ENCODE measurements at regions of chr11 and their contacts with region 1.

Region 1: GRCh38 chr11:108647701-108648527 is 17.0 kb upstream of the DDX10 start:
- DNase-seq: peak; percentile 42 to 82 (median 56)
- ATAC-seq: peak; percentile 96
- H3K4me3 ChIP-seq: no peak overlapping the region
- H3K4me3 Mint-ChIP-seq: no peak overlapping the region
- H3K27ac ChIP-seq: no peak overlapping the region
- H3K27ac Mint-ChIP-seq: no peak overlapping the region
- H3K4me1 ChIP-seq: no peaks in the 10 kb centered on the region
- H3K4me1 Mint-ChIP-seq: no peaks in the 10 kb centered on the region
- H3K27me3 ChIP-seq: no peaks in the 10 kb centered on the region
- H3K27me3 Mint-ChIP-seq: no peaks in the 10 kb centered on the region
- CTCF ChIP-seq: peak; percentile 78

Region 2: DNA sequence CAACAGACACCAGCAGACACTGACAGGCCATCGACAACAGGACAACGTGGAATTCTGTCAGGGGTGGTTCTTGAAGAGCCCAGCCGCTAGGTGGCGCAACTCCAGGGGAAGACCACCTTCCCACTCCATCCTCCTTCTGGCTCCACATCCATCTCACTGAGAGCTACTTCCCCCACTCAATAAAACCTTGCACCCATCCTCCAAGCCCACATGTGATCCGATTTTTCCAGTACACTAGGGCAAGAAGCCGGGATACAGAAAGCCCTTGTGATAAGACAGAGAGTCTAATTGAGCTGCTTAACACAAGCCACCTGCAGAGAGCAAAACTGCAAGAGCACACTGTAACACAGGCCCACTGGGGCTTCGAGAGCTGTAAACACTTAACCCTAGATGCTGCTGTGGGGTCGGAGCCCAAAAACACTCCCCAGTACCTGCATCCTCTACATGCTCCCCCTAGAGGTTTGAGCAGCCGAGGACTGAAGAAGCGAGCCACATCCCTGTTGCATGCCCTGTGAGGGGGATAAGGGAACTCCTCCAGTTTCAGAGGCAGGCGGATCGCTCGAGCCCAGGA is 731.2 kb before region 1 on chr11:
- CTCF ChIA-PET with region 1: no interaction called
- POLR2A ChIA-PET with region 1: no interaction called
- intact Hi-C with region 1: loop called in 1 of 2 experiments (anchors 5 kb)
- DNase-seq: peak in 9 of 14 experiments; percentile 3 to 61 (median 7)
- ATAC-seq: no peak
- H3K4me3 ChIP-seq: no peak overlapping the region
- H3K4me3 Mint-ChIP-seq: no peak overlapping the region
- H3K27ac ChIP-seq: no peak overlapping the region
- H3K27ac Mint-ChIP-seq: no peak overlapping the region
- H3K4me1 ChIP-seq: no peaks in the 10 kb centered on the region
- H3K4me1 Mint-ChIP-seq: no peaks in the 10 kb centered on the region
- H3K27me3 ChIP-seq: peaks cover 0 to 4% of the 10 kb centered on the region in 2 experiments
- H3K27me3 Mint-ChIP-seq: peaks cover 36% of the 10 kb centered on the region
- CTCF ChIP-seq: peak; percentile 62

Region 3: DNA sequence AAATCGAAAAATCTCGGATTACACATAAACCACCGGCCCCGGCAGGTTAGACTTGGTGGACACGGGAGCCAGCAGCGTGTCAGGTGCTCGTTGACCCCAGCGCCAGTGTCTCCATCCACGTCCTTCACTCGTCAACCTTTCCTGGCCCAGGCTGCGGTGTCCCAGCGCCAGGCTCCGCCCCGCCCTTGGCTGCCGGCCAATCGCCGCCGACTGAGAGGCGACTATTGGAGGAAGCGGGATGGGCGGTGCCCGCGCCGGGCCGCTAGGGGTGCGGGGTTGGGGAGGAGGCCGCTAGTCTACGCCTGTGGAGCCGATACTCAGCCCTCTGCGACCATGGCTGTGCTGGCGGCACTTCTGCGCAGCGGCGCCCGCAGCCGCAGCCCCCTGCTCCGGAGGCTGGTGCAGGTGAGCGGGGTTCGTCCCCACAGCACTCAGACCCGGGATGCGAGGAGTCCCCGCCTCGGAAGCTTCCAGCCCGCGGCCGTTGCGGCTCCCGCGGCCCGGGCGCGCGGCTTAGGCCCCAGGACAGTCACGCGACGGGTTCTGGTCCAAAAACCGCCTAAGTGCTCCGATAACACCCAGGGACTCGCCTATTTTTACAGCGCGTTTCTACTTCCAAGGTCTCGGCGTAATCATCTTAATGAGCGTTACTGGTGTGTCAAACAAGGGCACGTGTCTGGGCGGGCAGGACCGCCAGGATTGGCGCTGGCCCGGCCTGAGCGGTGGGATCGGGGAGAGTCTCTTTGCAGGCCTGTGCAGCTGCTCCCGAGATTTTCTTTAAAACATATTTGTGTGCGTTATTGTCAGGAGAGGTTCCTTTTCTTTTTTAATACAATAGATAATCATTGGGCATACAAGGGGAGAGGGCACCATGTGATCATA is 526.4 kb before region 1 on chr11 and contains the start of gene ACAT1:
- CTCF ChIA-PET with region 1: no interaction called
- POLR2A ChIA-PET with region 1: no interaction called
- intact Hi-C with region 1: loop called (anchors 1 to 2 kb)
- DNase-seq: peak; percentile 91 to 98 (median 96)
- ATAC-seq: peak; percentile 98
- H3K4me3 ChIP-seq: peak within 1 kb of the TSS; percentile 84
- H3K4me3 Mint-ChIP-seq: peak within 1 kb of the TSS; percentile 89
- H3K27ac ChIP-seq: peak within 1 kb of the TSS in 1 of 2 donors; percentile 46
- H3K27ac Mint-ChIP-seq: peak within 1 kb of the TSS; percentile 53
- H3K4me1 ChIP-seq: peaks cover 40% of the 10 kb centered on the region
- H3K4me1 Mint-ChIP-seq: peaks cover 42% of the 10 kb centered on the region
- H3K27me3 ChIP-seq: no peaks in the 10 kb centered on the region
- H3K27me3 Mint-ChIP-seq: no peaks in the 10 kb centered on the region
- CTCF ChIP-seq: no peak
- total RNA-seq, gene ACAT1: 13.8 to 18.5 TPM

Region 4: GRCh38 chr11:108340970-108341369 is 306.9 kb before region 1 on chr11:
- CTCF ChIA-PET with region 1: no interaction called
- POLR2A ChIA-PET with region 1: no interaction called
- intact Hi-C with region 1: loop called (anchors 1 to 10 kb)
- DNase-seq: no peak
- ATAC-seq: no peak
- H3K4me3 ChIP-seq: no peak overlapping the region
- H3K4me3 Mint-ChIP-seq: no peak overlapping the region
- H3K27ac ChIP-seq: no peak overlapping the region
- H3K27ac Mint-ChIP-seq: peak overlapping the region; percentile 74
- H3K4me1 ChIP-seq: no peaks in the 10 kb centered on the region
- H3K4me1 Mint-ChIP-seq: peaks cover 47% of the 10 kb centered on the region
- H3K27me3 ChIP-seq: no peaks in the 10 kb centered on the region
- H3K27me3 Mint-ChIP-seq: no peaks in the 10 kb centered on the region
- CTCF ChIP-seq: no peak

Region 5: DNA sequence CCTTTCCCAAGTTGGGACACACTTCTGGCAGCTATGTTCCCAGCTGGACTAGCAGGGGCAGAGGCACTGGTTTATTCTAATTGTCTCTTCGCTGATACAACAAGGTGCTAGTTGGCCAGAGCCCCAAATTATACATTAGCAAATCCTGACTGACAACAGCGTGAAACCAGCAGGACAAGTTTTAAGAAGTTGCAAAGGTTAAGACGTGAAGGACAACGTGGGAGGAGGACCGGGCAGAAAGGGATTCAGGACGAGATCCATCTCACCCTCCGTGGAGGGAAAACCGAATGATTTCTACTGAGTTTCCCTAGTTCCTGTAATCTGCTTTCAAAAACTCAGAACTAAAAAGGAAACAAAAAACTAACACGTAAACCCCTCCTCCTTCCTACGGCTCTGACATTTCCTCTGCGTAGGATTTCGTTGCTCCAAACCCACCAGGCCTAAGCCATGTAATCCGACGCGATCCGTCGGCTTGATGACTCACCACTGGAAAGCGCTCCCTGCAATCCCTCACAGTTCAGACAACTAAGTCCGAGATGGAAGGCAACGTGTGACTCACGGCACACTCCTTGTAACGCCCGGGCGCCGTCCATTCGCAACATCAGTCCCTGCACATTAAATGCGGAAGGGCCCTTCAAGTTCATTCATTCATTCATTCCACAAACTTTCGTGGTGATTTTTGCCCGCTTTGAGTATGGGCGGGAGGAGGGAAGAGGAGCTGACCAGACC is 150.4 kb before region 1 on chr11:
- CTCF ChIA-PET with region 1: no interaction called
- POLR2A ChIA-PET with region 1: no interaction called
- intact Hi-C with region 1: loop called in 1 of 2 experiments (anchors 10 kb)
- DNase-seq: peak; percentile 28 to 92 (median 60)
- ATAC-seq: peak; percentile 89
- H3K4me3 ChIP-seq: peak overlapping the region; percentile 77
- H3K4me3 Mint-ChIP-seq: peak overlapping the region; percentile 95
- H3K27ac ChIP-seq: peak overlapping the region; percentile 66 to 91
- H3K27ac Mint-ChIP-seq: peak overlapping the region; percentile 96
- H3K4me1 ChIP-seq: peaks cover 15% of the 10 kb centered on the region
- H3K4me1 Mint-ChIP-seq: peaks cover 27% of the 10 kb centered on the region
- H3K27me3 ChIP-seq: no peaks in the 10 kb centered on the region
- H3K27me3 Mint-ChIP-seq: no peaks in the 10 kb centered on the region
- CTCF ChIP-seq: no peak

Region 6: DNA sequence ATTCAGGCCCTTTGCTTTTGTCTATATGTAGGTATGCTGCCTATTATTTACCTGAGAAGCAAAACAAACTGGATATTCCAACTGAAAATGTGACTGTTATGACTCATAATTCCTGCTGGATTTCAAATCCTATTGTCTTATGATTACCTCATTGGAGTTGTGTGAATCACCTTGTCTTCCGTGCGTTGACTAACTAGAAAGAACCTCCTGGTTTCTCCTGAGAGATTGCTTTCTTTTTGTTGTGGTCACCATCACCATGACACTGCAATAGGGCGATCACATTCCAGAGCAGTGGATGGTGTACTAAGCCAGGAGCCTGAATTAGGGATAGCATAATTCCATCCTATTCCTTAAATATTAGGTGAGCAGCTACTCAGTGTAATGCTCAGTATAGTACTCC is 31.3 kb before region 1 on chr11:
- CTCF ChIA-PET with region 1: no interaction called
- POLR2A ChIA-PET with region 1: no interaction called
- intact Hi-C with region 1: no loop called
- DNase-seq: no peak
- ATAC-seq: no peak
- H3K4me3 ChIP-seq: no peak overlapping the region
- H3K4me3 Mint-ChIP-seq: no peak overlapping the region
- H3K27ac ChIP-seq: no peak overlapping the region
- H3K27ac Mint-ChIP-seq: no peak overlapping the region
- H3K4me1 ChIP-seq: no peaks in the 10 kb centered on the region
- H3K4me1 Mint-ChIP-seq: no peaks in the 10 kb centered on the region
- H3K27me3 ChIP-seq: peaks cover 0 to 6% of the 10 kb centered on the region in 2 experiments
- H3K27me3 Mint-ChIP-seq: peaks cover 13% of the 10 kb centered on the region
- CTCF ChIP-seq: no peak